ENCODE measurements at regions of chr10 and their contacts with region 1.

Region 1: DNA sequence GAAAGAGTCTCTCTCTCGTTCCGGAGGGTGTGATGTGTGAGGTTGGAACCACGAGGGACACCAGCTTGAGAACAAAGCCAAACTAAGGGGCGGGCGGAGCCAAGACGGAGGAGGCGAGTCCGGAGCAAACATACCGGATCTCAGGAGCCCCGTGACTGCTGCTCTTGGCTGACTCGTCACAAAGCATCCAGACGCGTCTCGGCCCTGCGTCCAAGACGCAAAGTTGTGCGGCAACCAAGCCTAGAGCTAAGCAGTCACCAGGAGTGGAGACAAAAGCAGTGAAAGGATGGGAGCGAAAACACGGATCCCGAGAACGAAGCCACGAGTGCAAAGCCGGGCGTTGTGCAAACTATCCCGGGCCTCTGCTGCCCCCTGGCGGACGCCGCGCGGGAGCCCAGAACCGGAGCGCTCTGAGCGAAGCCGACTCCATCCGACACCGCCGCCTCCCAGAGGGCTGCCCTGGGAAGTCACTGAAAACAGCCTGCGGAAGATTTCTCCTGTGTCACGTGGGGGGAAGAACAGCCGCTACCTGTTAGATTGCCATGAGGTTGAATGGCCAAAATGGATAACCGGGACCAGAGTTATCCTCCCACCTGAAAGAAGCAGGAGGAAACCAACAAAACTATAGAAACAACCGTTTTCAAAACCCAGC is 46.4 kb upstream of the TMEM72 start:
- DNase-seq: peak; percentile 93
- H3K4me3 ChIP-seq: peak overlapping the region in 3 of 4 donors; percentile 31 to 59 (median 33)
- H3K27ac ChIP-seq: peak overlapping the region; percentile 32 to 63 (median 50)
- H3K4me1 ChIP-seq: peaks cover 0 to 13% (median 8%) of the 10 kb centered on the region in 4 donors
- H3K27me3 ChIP-seq: peaks cover 10% of the 10 kb centered on the region
- CTCF ChIP-seq: peak; percentile 96 to 98 (median 97)
- EP300 ChIP-seq: no peak
- POLR2A ChIP-seq: no peak

Region 2: DNA sequence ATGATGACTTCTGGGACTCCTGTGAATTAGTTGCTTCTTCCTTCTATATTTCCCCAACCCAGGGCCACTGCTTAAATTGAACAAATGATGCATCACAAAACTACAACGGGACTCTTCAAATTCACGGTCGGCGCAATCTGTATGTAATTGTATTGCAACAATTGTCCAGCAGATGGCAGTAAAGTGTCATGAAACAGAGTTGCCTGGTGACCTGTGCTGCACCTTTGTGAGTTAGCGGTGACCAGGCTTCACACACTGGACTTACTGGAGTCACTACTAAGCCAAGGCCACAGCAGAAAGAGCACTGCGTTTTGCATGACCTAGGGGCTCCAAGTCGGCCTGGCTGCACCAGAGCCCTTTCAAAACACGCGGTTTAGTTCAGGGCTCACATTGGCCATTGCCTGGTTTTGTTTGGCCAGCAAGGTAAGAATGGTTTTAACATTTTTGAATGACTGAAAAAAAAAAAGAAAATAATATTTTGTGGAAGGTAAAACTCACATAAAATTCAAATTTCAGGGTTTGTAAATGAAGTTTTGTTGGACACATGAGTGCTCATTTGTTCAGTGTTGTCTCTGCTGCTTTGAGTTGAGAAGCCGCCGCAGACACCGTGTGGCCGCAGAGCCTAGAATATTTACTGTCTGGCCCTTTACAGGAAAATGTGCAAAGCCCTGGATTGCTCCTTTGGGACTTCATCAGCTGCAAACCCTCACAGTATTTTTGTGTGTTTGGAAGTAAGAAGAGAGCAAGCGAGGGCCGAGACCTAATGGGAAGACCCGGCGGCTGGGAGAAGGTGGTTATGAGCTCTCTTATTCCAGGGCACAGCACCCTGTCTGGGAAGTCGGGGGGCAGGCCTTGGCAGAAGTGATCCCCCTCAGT is 1192.9 kb before region 1 on chr10:
- in situ Hi-C with region 1: loop called (anchors 5 to 10 kb)
- intact Hi-C with region 1: loop called (anchors 5 kb)
- DNase-seq: peak; percentile 30
- H3K4me3 ChIP-seq: no peak overlapping the region
- H3K27ac ChIP-seq: no peak overlapping the region
- H3K4me1 ChIP-seq: peaks cover 0 to 6% (median 0%) of the 10 kb centered on the region in 4 donors
- H3K27me3 ChIP-seq: peaks cover 27% of the 10 kb centered on the region
- CTCF ChIP-seq: peak; percentile 73 to 85 (median 78)
- EP300 ChIP-seq: no peak
- POLR2A ChIP-seq: no peak

Region 3: GRCh38 chr10:44030143-44030542 is 834.6 kb before region 1 on chr10:
- in situ Hi-C with region 1: loop called in 1 of 4 experiments (anchors 25 kb)
- intact Hi-C with region 1: no loop called
- DNase-seq: no peak
- H3K4me3 ChIP-seq: no peak overlapping the region
- H3K27ac ChIP-seq: no peak overlapping the region
- H3K4me1 ChIP-seq: no peaks in the 10 kb centered on the region
- H3K27me3 ChIP-seq: no peaks in the 10 kb centered on the region
- CTCF ChIP-seq: no peak
- EP300 ChIP-seq: no peak
- POLR2A ChIP-seq: no peak

Region 4: DNA sequence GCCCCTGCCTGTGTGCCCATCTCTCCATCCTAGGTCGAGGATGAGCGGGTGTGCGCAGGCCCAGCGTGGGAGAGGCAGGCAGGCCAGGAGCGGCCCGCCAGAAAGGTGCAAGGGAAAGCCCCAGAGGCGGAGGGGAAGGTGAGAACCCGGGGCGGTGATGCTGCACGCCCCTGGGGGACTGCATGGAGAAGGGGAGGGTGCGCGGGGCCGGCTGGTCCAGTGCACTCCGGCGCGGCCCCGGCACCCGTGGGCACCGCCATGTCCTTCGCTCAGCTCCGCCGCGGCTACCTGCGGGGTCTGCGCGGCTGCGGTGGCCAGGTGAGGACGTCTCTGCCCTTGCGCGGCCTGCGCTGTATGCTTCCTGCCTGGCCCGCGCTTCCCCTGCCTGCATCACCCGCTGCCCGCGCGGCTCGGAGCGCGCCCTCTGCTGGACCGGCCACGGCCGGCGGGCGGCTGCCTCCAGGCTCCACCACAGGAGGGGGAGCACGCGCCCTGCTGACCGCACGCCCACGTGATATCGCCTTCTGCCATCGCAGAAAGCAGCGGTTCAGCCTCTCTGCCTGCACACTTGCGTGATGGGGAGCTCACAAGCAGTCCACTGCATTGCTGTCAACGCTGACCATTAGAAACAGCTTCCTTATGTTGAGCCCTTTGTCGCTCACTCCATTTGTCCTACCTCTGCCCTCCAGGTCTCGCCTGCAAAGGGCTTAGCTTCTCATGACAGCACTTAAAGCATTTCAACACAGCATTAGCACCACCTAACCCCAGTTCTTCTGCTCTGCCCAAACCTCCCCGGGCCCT is 553.8 kb before region 1 on chr10:
- in situ Hi-C with region 1: loop called in 1 of 4 experiments (anchors 25 kb)
- intact Hi-C with region 1: no loop called
- DNase-seq: peak; percentile 84
- H3K4me3 ChIP-seq: peak overlapping the region in 2 of 4 donors; percentile 24 to 34
- H3K27ac ChIP-seq: peak overlapping the region in 1 of 4 donors; percentile 8
- H3K4me1 ChIP-seq: peaks cover 4 to 10% (median 9%) of the 10 kb centered on the region in 4 donors
- H3K27me3 ChIP-seq: no peaks in the 10 kb centered on the region
- CTCF ChIP-seq: peak; percentile 77 to 90 (median 85)
- EP300 ChIP-seq: no peak
- POLR2A ChIP-seq: no peak

Region 5: DNA sequence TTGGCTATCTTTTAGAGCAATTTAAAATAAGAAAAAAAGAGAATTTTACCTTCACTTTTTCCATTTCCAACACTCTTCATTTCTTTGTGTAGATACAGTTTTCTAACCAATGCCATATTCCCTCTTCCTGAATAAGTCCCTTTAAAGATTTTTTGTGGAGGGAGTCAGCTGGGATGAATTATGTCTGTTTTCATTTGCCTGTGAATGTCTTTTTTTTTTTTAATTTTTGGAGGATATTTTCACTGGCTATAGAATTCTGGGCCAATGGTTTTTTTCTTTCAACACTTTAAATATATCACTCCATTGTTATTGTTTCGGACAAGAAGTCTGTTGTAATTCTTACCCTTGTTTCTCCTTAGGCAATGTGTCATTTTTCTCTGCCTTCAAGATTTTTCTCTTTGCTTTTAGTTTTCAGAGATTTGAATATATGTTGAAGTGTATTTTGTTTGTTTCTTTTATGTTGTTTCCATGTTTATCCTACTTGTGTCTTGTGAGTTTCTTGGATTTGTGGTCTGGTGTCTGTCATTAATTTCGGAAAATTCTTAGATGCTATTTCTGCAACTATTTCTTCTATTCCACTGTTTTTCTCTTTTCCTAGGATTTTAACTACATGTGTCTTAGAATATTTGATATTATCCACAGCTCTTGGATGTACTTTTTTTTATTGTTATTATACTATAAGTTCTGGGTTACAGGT is 459.9 kb before region 1 on chr10:
- in situ Hi-C with region 1: no loop called
- intact Hi-C with region 1: no loop called
- DNase-seq: no peak
- H3K4me3 ChIP-seq: no peak overlapping the region
- H3K27ac ChIP-seq: no peak overlapping the region
- H3K4me1 ChIP-seq: no peaks in the 10 kb centered on the region
- H3K27me3 ChIP-seq: no peaks in the 10 kb centered on the region
- CTCF ChIP-seq: no peak
- EP300 ChIP-seq: no peak
- POLR2A ChIP-seq: no peak